ENCODE measurements at regions of chr2 and their contacts with region 1.

Region 1: GRCh38 chr2:152047819-152048471 is 50.9 kb downstream of the CACNB4 start:
- DNase-seq: no peak
- ATAC-seq: no peak
- H3K4me3 ChIP-seq: no peak overlapping the region
- H3K27ac ChIP-seq: no peak overlapping the region
- H3K4me1 ChIP-seq: no peaks in the 10 kb centered on the region
- H3K27me3 ChIP-seq: no peaks in the 10 kb centered on the region

Region 2: DNA sequence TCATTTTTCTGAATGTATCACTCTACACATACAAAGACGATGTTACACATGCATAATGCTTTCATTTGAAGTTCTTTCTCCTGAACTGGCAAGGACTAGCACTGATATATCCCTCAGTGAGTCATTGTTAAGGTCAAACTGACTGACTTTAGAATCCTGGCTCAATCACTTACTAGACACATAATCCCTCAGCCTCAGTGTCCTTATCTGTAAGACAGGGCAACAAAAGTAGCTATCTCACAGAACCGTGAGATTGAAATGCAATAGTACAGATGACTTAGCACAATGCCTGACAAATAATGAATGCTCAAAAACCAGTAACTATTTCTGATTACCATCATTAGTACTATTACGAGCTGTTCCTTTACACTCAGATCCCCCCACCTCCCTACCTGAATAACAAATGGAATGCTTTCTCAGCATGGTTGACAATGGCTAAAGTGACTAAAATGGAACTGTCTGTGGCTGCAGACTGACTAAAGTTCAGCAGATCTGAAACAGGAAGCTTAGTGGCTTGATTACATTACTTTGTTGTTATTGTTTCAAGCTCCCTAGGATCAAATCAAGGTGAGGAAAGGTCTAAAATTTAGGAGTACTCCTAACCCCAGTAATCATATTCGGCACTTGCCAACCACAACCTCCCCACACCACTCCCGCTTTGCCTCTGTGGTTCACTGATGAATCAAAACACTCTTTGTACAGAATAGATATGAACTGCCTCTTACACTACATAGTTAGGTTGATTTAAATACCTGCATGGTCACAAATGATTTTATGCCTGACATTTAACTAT is 86.7 kb after region 1 on chr2:
- intact Hi-C with region 1: no loop called
- DNase-seq: no peak
- ATAC-seq: peak in 1 of 2 donors; percentile 85
- H3K4me3 ChIP-seq: no peak overlapping the region
- H3K27ac ChIP-seq: no peak overlapping the region
- H3K4me1 ChIP-seq: no peaks in the 10 kb centered on the region
- H3K27me3 ChIP-seq: no peaks in the 10 kb centered on the region

Region 3: GRCh38 chr2:152155209-152155608 is 107.3 kb after region 1 on chr2:
- intact Hi-C with region 1: loop called in 1 of 4 experiments (anchors 10 kb)
- DNase-seq: no peak
- ATAC-seq: no peak
- H3K4me3 ChIP-seq: no peak overlapping the region
- H3K27ac ChIP-seq: no peak overlapping the region
- H3K4me1 ChIP-seq: no peaks in the 10 kb centered on the region
- H3K27me3 ChIP-seq: no peaks in the 10 kb centered on the region

Measured in right cardiac atrium (tissue), 5 donors.